ENCODE measurements at regions of chr6 and their contacts with region 1.

Region 1: GRCh38 chr6:68778356-68779020 is 143.4 kb downstream of the ADGRB3 start:
- DNase-seq: peak; percentile 43
- ATAC-seq: peak; percentile 96
- H3K4me3 Mint-ChIP-seq: no peak overlapping the region
- H3K27ac Mint-ChIP-seq: no peak overlapping the region
- H3K4me1 Mint-ChIP-seq: peaks cover 4% of the 10 kb centered on the region; the same call in 1 of the 2 replicates
- H3K27me3 Mint-ChIP-seq: no peaks in the 10 kb centered on the region
- CTCF ChIP-seq: peak; percentile 49; the same call in 1 of the 2 replicates

Region 2: GRCh38 chr6:68343901-68344300 is 434.6 kb before region 1 on chr6:
- CTCF ChIA-PET with region 1: interaction called, 11 read pairs
- POLR2A ChIA-PET with region 1: no interaction called
- DNase-seq: peak; percentile 64
- ATAC-seq: peak; percentile 96
- H3K4me3 Mint-ChIP-seq: no peak overlapping the region
- H3K27ac Mint-ChIP-seq: no peak overlapping the region
- H3K4me1 Mint-ChIP-seq: no peaks in the 10 kb centered on the region
- H3K27me3 Mint-ChIP-seq: no peaks in the 10 kb centered on the region
- CTCF ChIP-seq: peak; percentile 45

Region 3: DNA sequence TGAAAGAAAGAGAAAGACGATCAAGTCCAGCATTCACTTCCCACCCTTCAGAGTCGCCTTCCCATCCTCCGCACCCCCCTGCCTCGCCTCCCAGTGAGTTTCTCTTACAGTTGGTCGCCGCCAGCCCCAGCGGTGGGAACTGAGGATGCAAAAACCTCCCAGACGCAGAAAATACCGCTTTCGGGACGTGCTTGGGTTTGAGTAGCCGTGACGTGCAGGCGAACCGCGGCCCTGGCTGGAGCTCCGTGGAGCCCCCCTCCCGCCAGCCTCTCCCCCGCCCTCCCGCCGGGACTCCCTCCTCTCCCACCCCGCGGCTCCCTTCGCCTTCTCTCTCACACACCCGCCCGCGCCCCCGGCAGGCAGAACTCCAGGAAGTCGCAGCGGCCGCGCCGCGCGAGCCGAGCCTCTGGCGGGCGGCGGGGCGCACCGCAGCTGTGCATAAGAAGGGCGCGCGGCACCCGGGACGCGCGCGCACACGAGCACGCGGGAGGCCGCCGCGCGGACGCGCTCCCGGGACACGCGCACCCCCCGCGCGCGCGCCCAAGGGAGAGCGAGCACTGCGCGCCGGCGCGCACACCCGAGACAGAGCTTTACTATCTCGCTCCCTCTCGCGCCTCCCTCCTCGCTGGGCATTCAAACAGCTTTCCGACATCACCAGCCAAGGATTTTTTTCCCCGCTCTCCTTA is 143.6 kb before region 1 on chr6 and contains the start of gene ADGRB3:
- CTCF ChIA-PET with region 1: interaction called, 11 read pairs
- POLR2A ChIA-PET with region 1: no interaction called
- DNase-seq: peak; percentile 76
- ATAC-seq: peak; percentile 67
- H3K4me3 Mint-ChIP-seq: peak within 1 kb of the TSS; percentile 93
- H3K27ac Mint-ChIP-seq: peak within 1 kb of the TSS; percentile 80; the same call in 1 of the 2 replicates
- H3K4me1 Mint-ChIP-seq: peaks cover 36% of the 10 kb centered on the region
- H3K27me3 Mint-ChIP-seq: peaks cover 63% of the 10 kb centered on the region
- CTCF ChIP-seq: no peak
- total RNA-seq, gene ADGRB3: 1.0 to 1.9 TPM (median 1.2 TPM) in 3 replicates

Measured in WTC11 (cell line).